ENCODE measurements at regions of chr11 and their contacts with region 1.

Region 1: DNA sequence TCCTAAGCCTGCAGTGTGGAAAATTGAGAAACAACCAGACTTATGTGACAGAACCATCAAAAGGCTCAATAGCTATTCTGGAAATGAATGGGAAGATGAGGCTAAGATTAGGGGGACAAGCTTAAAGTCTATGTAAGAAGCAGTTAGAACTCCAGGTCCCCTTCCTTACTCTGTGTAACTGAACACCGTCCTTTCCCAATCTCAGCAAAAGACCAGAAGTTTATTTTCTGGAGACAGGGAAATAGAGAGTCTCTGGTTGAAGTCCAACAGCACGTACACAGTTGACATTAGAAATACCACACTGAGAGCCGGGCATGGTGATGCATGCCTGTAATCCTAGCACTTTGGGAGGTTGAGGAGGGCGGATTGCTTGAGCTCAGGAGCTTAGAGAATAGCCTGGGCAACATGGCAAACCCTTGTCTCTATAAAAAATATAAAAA is 93.9 kb downstream of the CD44 start:
- DNase-seq: no peak
- ATAC-seq: no peak
- H3K4me3 Mint-ChIP-seq: no peak overlapping the region
- H3K27ac Mint-ChIP-seq: no peak overlapping the region
- H3K4me1 Mint-ChIP-seq: peaks cover 52% of the 10 kb centered on the region
- H3K27me3 Mint-ChIP-seq: no peaks in the 10 kb centered on the region
- CTCF ChIP-seq: no peak

Region 2: DNA sequence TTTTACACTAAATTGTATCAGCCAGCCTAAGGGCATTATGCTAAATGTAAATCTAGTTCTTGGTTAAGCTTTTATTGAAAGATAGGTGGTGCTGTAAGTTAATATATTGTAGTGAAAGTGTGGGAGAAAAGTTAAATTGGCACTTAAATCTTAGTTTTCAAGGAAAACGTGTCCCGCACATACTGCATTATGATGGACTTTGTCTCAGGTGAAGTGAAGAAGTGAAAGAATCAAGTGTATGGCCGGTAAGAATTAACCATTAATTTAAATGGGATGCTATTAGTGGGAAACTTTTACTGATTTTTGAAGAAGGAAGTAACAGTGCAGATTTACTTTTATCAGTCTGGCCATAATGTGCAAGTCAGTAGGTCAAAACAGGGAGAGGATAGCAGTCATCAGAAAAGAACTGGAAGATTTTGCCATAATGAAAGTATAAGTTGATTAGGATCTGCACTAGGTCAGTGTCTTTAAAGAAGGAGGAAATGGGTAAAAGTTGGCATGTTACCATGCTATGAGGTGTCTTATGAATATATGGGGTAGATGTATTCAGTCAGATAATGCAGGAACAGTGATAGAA is 234.9 kb before region 1 on chr11:
- CTCF ChIA-PET with region 1: interaction called, 8 read pairs
- POLR2A ChIA-PET with region 1: no interaction called
- intact Hi-C with region 1: loop called (anchors 5 kb)
- DNase-seq: no peak
- ATAC-seq: peak; percentile 42
- H3K4me3 Mint-ChIP-seq: no peak overlapping the region
- H3K27ac Mint-ChIP-seq: no peak overlapping the region
- H3K4me1 Mint-ChIP-seq: peaks cover 25% of the 10 kb centered on the region
- H3K27me3 Mint-ChIP-seq: no peaks in the 10 kb centered on the region
- CTCF ChIP-seq: peak; percentile 90

Measured in activated CD8-positive, alpha-beta T cell treated with anti-CD3 and anti-CD28 coated beads for 36 hours (primary cell).